Calu3 (cell line): ENCODE measurements at regions of chr10 and their contacts with region 1.

Region 1: DNA sequence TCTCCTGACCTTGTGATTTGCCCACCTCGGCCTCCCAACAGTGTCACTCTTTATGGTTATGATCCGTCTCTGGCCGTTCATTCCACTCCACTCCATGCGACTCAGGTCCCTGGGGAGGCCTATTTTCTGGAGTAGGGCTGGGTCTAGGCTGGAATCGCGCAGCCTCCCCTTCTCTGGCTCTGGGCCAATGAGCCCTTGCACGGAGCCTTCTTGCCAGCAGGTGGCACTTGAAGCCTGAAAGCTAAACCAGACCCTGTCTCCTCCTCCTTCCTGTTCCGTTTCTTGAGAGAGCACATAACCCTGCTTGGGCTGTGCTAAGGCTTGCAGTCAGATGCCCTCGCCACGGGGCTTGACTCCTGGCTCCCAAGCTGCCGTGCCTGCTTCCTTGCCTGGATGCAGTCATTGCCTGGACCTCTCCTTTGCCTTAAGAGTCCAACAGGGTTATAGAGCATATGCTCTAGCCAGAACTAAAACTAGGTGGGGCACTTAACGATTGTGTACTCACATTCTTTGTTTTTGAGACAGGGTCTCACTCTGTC is 9.6 kb upstream of the DNAJB12 start:
- DNase-seq: peak; percentile 93
- H3K4me3 Mint-ChIP-seq: peak overlapping the region; percentile 43
- H3K27ac Mint-ChIP-seq: peak overlapping the region; percentile 58
- H3K4me1 Mint-ChIP-seq: peaks cover 11% of the 10 kb centered on the region
- H3K27me3 Mint-ChIP-seq: no peaks in the 10 kb centered on the region
- CTCF ChIP-seq: peak; percentile 96

Region 2: DNA sequence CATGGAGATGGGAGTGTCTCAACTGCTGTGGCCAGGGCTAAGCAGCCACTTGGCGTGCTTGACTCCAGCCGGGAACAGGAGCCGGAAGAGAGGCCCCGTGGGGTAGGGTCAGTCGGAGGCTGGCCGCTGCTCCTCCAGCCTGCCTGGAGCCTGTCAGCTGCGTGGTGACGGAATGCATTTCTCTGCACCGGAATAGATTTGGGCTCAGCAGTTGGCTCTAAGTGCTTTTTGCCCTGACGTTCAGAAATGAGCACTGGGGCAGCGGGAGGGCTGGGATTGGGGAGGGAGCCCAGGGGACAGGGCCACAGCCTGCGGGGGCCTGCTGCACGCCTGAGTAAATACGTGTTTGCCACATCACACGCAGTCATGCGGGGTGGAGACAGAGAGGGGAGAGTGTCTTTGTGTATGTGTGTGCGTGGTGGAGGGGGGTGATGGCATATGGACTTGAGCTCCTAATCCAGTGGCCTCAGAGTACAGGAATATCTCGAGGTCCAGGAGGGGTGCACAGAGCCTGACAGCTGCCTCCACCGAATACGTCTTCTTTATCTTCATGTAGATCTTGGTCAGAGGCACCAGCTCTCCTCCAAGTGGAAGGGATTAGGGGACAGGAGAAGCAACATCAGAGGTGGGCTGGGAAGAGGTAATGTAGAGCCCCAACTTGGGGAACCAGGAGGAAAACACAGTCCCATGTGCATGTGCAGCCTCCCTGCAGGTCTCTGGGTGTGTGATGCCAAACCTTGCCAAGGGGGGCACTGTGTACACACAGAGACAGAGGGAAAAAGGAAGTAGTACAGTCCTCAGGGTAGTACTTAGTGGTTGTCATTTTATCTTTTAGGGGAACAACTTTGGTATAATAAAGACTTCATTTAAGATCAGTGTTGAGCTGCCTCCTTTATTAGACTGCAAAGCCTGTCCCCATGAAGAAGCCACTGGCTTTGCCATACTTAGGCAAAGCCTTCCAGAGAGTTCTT is 816.1 kb before region 1 on chr10:
- CTCF ChIA-PET with region 1: no interaction called
- intact Hi-C with region 1: no loop called
- DNase-seq: no peak
- H3K4me3 Mint-ChIP-seq: no peak overlapping the region
- H3K27ac Mint-ChIP-seq: no peak overlapping the region
- H3K4me1 Mint-ChIP-seq: no peaks in the 10 kb centered on the region
- H3K27me3 Mint-ChIP-seq: peaks cover 23% of the 10 kb centered on the region
- CTCF ChIP-seq: peak; percentile 16

Region 3: GRCh38 chr10:71684356-71685173 is 679.7 kb before region 1 on chr10:
- CTCF ChIA-PET with region 1: no interaction called
- intact Hi-C with region 1: no loop called
- DNase-seq: peak; percentile 50
- H3K4me3 Mint-ChIP-seq: no peak overlapping the region
- H3K27ac Mint-ChIP-seq: no peak overlapping the region
- H3K4me1 Mint-ChIP-seq: no peaks in the 10 kb centered on the region
- H3K27me3 Mint-ChIP-seq: peaks cover 73% of the 10 kb centered on the region
- CTCF ChIP-seq: peak; percentile 26

Region 4: DNA sequence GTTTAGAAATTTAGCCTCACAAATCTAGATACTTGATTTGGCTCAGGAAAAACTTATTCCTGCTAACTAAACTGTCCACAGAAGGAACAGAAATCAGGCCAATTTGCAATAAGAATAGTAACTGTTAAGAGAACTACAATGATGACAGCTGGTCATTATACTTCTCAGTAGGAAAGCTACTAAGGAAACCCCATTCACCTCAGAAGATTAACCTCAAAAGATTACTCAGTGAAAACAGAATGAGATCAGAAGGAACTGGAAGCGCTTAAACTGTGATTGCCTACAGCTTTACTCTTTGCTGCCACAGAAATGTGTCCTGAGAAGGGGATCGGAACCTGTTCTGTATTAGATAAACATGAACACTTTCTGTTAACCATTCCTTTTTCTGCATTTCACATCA is 14.8 kb after region 1 on chr10:
- CTCF ChIA-PET with region 1: interaction called, 10 read pairs
- intact Hi-C with region 1: no loop called
- DNase-seq: no peak
- H3K4me3 Mint-ChIP-seq: no peak overlapping the region
- H3K27ac Mint-ChIP-seq: no peak overlapping the region
- H3K4me1 Mint-ChIP-seq: no peaks in the 10 kb centered on the region
- H3K27me3 Mint-ChIP-seq: no peaks in the 10 kb centered on the region
- CTCF ChIP-seq: no peak

Region 5: GRCh38 chr10:72435570-72435969 is 71.3 kb after region 1 on chr10:
- CTCF ChIA-PET with region 1: no interaction called
- intact Hi-C with region 1: no loop called
- DNase-seq: no peak
- H3K4me3 Mint-ChIP-seq: no peak overlapping the region
- H3K27ac Mint-ChIP-seq: no peak overlapping the region
- H3K4me1 Mint-ChIP-seq: no peaks in the 10 kb centered on the region
- H3K27me3 Mint-ChIP-seq: no peaks in the 10 kb centered on the region
- CTCF ChIP-seq: no peak

Region 6: GRCh38 chr10:72567884-72568640 is 203.8 kb after region 1 on chr10:
- CTCF ChIA-PET with region 1: interaction called, 5 read pairs
- intact Hi-C with region 1: loop called (anchors 5 kb)
- DNase-seq: peak; percentile 25
- H3K4me3 Mint-ChIP-seq: no peak overlapping the region
- H3K27ac Mint-ChIP-seq: peak overlapping the region; percentile 10
- H3K4me1 Mint-ChIP-seq: peaks cover 27% of the 10 kb centered on the region
- H3K27me3 Mint-ChIP-seq: no peaks in the 10 kb centered on the region
- CTCF ChIP-seq: no peak

Region 7: GRCh38 chr10:72692057-72692910 is 328.0 kb after region 1 on chr10 and contains the start of gene MCU:
- CTCF ChIA-PET with region 1: interaction called, 3 read pairs
- intact Hi-C with region 1: loop called (anchors 5 kb)
- DNase-seq: peak; percentile 97
- H3K4me3 Mint-ChIP-seq: peak within 1 kb of the TSS; percentile 84
- H3K27ac Mint-ChIP-seq: peak within 1 kb of the TSS; percentile 60
- H3K4me1 Mint-ChIP-seq: peaks cover 56% of the 10 kb centered on the region
- H3K27me3 Mint-ChIP-seq: no peaks in the 10 kb centered on the region
- CTCF ChIP-seq: no peak
- total RNA-seq, gene MCU: 70.2 and 96.6 TPM in 2 replicates

Region 8: GRCh38 chr10:72834183-72834825 is 470.0 kb after region 1 on chr10:
- CTCF ChIA-PET with region 1: no interaction called
- intact Hi-C with region 1: loop called (anchors 1 kb)
- DNase-seq: peak; percentile 59
- H3K4me3 Mint-ChIP-seq: no peak overlapping the region
- H3K27ac Mint-ChIP-seq: no peak overlapping the region
- H3K4me1 Mint-ChIP-seq: peaks cover 41% of the 10 kb centered on the region
- H3K27me3 Mint-ChIP-seq: no peaks in the 10 kb centered on the region
- CTCF ChIP-seq: peak; percentile 31

Region 9: DNA sequence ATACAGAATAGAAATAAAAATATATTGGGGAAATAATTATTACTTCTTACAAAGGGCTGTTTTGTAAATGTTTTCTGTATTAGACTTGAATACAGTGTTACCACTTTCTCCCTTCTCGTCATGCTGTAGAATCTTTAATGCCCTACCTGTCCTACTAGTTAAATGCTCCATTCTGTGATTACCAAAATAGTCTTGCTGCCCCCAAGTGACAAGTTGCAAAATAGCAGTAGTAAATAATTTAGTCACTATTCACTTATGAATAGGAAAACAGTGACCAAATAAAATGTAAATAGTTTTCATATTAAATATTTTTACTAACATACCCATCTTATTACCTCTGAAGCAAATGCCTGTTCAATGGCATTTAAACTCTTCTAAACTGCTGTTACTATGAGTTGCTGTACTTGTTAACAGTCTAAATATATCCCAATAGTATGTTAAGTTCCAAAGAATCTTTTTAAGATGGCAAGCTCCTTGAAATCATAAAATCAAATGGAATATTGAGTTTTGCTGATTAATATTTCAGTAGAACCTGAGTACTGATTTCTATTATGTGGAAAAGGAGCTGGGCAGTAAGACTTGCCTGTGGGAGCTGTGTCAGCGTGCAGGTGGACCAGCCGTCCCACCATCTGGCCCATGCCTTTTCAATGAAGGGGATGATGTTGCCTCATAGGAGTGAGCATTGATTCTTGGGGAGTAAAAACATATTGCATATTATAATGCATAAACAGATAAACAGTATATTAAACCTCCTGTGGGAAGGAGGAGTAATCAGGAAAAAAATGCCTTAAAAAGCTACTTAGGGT is 511.1 kb after region 1 on chr10:
- CTCF ChIA-PET with region 1: no interaction called
- intact Hi-C with region 1: loop called (anchors 1 kb)
- DNase-seq: peak; percentile 28
- H3K4me3 Mint-ChIP-seq: no peak overlapping the region
- H3K27ac Mint-ChIP-seq: no peak overlapping the region
- H3K4me1 Mint-ChIP-seq: no peaks in the 10 kb centered on the region
- H3K27me3 Mint-ChIP-seq: no peaks in the 10 kb centered on the region
- CTCF ChIP-seq: peak; percentile 71

Region 10: DNA sequence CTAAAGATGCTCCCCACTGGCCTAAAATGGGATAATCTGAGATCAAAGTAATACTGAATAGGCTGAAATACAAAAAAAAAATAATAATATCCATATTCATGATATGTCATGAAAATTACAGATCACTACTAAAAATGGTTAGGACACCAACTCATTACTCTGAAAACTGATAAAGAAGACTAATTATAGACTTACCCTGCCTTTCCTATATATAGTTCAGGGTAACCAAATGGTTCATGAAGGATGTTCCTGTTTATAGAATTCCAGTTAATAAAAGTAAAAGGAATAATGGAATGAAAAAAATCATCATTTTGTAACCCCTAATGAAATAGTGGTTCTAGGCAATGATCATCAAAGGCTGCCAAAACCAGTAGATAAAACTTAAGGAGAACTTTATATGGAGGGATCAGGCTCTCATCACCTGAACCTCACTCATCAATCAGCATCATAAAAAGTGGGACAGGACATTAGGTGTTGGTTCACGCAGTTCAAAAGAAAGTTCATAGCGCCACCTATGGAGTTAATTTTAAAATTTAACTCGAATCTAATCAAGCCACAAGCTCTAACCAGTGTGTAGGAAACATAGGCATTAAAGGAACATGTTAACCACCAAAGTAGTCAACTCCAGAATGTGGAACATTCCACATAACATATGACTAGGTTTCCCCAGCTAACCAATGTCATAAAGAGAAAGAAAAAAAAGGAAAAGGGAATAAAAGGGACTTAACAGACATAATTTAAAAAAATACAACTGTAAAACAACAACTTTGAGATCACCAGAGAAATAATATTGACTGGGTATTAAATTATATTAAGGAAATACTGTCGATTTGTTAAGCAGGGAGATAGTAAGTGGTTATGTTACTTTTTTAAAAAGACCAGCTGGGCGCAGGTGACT is 696.7 kb after region 1 on chr10:
- CTCF ChIA-PET with region 1: interaction called, 5 read pairs
- intact Hi-C with region 1: loop called (anchors 2 kb)
- DNase-seq: no peak
- H3K4me3 Mint-ChIP-seq: no peak overlapping the region
- H3K27ac Mint-ChIP-seq: no peak overlapping the region
- H3K4me1 Mint-ChIP-seq: no peaks in the 10 kb centered on the region
- H3K27me3 Mint-ChIP-seq: no peaks in the 10 kb centered on the region
- CTCF ChIP-seq: no peak